A673 (cell line): ENCODE measurements at regions of chr1 and their contacts with region 1.

Region 1: DNA sequence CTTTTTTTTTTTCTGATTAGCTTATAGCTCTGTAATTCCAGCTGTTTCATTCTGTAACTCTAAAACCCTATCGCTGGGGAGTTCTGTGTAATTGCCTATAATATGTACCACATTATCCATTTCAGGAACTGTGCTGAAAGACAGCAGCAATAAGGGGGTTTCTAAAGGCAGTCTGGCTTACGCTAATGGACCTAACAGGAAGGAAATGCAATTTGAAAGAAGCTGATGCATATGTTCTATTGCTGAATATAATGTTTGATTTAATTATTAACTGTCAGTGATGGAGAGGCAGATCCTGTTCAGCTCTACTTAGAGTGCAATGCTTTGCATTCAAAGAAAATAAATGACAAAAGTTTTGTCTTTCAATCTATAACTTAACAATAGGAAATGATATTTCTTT is 209.4 kb upstream of the SNX7 start:
- DNase-seq: peak; percentile 97
- H3K4me3 ChIP-seq: peak overlapping the region; percentile 22
- H3K27ac ChIP-seq: peak overlapping the region; percentile 96
- H3K4me1 ChIP-seq: peaks cover 49% of the 10 kb centered on the region
- H3K27me3 ChIP-seq: no peaks in the 10 kb centered on the region
- CTCF ChIP-seq: no peak

Region 2: DNA sequence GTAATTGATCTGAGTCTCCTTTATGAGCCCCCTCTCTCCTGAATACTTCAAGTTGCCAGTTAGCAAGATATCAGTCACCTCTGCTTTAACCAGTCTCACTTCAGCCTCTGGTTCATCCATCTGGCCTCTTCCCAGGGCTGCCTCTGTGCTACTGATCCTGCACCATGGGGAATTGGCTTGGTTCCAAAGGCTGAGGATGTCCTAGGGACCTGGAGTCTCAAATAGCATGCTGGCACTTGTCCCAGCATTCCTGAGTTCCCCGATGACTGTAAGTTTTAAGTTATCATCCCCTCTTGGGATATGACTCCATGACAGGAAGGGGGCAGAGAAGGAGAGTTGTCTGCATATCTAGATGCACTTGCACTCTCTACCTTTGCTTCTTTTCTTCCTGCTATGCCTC is 1478.6 kb before region 1 on chr1:
- CTCF ChIA-PET with region 1: no interaction called
- POLR2A ChIA-PET with region 1: no interaction called
- intact Hi-C with region 1: loop called (anchors 10 kb)
- DNase-seq: peak; percentile 81
- H3K4me3 ChIP-seq: no peak overlapping the region
- H3K27ac ChIP-seq: no peak overlapping the region
- H3K4me1 ChIP-seq: peaks cover 25% of the 10 kb centered on the region
- H3K27me3 ChIP-seq: no peaks in the 10 kb centered on the region
- CTCF ChIP-seq: no peak

Region 3: GRCh38 chr1:97906567-97907241 is 545.5 kb before region 1 on chr1:
- CTCF ChIA-PET with region 1: no interaction called
- POLR2A ChIA-PET with region 1: no interaction called
- intact Hi-C with region 1: loop called (anchors 5 kb)
- DNase-seq: peak; percentile 93
- H3K4me3 ChIP-seq: peak overlapping the region; percentile 16
- H3K27ac ChIP-seq: peak overlapping the region; percentile 75
- H3K4me1 ChIP-seq: peaks cover 82% of the 10 kb centered on the region
- H3K27me3 ChIP-seq: no peaks in the 10 kb centered on the region
- CTCF ChIP-seq: no peak

Region 4: GRCh38 chr1:98323906-98324358 is 128.2 kb before region 1 on chr1:
- CTCF ChIA-PET with region 1: interaction called, 3 read pairs
- POLR2A ChIA-PET with region 1: no interaction called
- intact Hi-C with region 1: loop called (anchors 5 kb)
- DNase-seq: peak; percentile 97
- H3K4me3 ChIP-seq: no peak overlapping the region
- H3K27ac ChIP-seq: peak overlapping the region; percentile 94
- H3K4me1 ChIP-seq: peaks cover 55% of the 10 kb centered on the region
- H3K27me3 ChIP-seq: no peaks in the 10 kb centered on the region
- CTCF ChIP-seq: no peak

Region 5: GRCh38 chr1:98420376-98421084 is 31.6 kb before region 1 on chr1:
- CTCF ChIA-PET with region 1: no interaction called
- POLR2A ChIA-PET with region 1: no interaction called
- intact Hi-C with region 1: no loop called
- DNase-seq: no peak
- H3K4me3 ChIP-seq: no peak overlapping the region
- H3K27ac ChIP-seq: no peak overlapping the region
- H3K4me1 ChIP-seq: no peaks in the 10 kb centered on the region
- H3K27me3 ChIP-seq: no peaks in the 10 kb centered on the region
- CTCF ChIP-seq: no peak

Region 6: GRCh38 chr1:98704474-98704873 is 252.3 kb after region 1 on chr1:
- CTCF ChIA-PET with region 1: no interaction called
- POLR2A ChIA-PET with region 1: no interaction called
- intact Hi-C with region 1: no loop called
- DNase-seq: no peak
- H3K4me3 ChIP-seq: no peak overlapping the region
- H3K27ac ChIP-seq: no peak overlapping the region
- H3K4me1 ChIP-seq: no peaks in the 10 kb centered on the region
- H3K27me3 ChIP-seq: no peaks in the 10 kb centered on the region
- CTCF ChIP-seq: no peak